ENCODE measurements at regions of chr4 and their contacts with region 1.

Region 1: DNA sequence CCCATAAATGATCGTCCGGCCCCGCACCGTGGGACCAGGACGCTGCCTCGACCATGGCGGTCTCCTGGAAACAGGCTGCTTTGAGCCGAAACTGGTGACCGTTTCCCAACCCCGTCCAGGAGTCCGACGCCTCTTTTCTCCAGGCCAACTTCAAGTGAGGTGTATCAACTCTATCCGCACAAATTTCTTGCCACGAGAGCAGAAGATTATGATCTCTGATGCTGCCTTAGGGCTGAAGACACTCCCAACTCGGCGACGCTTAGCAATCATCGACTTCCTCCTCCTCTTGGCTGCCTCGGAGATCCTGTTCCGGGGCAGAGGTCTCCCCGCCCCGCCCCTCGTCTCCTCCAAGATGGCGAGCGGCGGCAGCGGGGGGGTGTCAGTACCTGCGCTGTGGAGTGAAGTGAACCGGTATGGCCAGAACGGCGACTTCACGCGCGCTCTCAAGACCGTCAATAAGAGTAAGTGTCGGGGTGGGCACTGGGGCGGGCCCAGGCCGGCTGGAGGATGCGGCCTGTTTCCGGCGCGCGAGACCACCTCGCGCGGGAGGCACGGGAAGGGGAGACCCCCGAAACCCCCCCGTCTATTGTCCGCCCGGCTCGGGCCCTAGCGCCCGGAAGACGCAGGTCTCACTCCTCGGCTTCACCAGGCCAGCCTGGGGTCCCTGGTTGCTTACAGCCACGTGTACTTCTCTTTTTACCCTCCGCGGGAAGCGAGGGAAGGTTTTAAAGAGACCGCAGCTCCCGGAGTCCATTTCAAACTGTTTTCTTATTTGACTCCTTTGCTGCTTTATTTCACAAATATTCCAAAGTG is at the start of gene SRP72:
- DNase-seq: peak; percentile 88
- H3K4me3 Mint-ChIP-seq: peak within 1 kb of the TSS; percentile 98
- H3K27ac Mint-ChIP-seq: peak within 1 kb of the TSS; percentile 99
- H3K4me1 Mint-ChIP-seq: peaks cover 60% of the 10 kb centered on the region
- H3K27me3 Mint-ChIP-seq: no peaks in the 10 kb centered on the region
- total RNA-seq, gene SRP72: 199 and 211 TPM in 2 replicates

Region 2: DNA sequence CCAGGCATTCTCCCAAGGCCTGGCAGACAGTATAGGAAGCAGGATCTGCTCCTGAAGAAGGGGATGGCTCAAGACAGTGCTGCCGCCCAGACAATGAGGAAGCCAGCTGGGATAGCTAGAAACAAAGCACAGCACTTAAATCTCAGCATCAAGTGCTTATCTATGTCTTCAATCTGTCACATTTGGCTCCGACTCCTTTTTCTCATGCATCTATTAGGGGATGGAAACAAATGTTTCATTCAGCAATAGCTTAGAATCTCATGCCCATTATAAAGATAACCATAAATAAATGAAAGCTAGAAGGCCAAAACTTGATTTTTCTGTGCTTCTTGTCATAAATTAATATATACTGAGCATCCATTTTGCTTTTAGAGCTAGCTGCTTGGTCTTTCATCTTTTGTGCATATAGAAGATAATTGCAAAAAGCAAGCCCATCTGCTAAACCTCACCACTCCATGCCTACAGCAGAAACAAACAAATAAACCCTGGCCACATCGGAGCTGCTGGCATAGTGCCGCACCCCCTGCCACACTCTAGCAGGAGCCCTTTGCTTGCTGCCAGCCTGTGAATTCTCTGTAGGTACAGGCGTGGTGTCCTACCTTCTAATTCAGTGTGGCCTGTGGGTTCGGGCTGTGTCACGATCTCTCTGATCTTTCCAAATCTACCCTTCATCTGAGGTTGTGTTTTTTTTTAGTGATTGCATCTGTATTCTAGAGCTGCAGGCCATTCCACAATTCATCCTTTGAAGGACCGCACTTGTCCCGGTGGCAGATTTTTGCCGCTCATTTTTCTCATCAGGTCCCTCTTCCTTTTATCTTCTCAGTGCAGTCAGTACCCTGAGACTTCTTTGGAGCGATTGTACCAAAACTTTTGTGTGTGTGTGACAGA is 155.9 kb before region 1 on chr4:
- intact Hi-C with region 1: no loop called
- DNase-seq: no peak
- H3K4me3 Mint-ChIP-seq: no peak overlapping the region
- H3K27ac Mint-ChIP-seq: no peak overlapping the region
- H3K4me1 Mint-ChIP-seq: no peaks in the 10 kb centered on the region
- H3K27me3 Mint-ChIP-seq: no peaks in the 10 kb centered on the region

Region 3: DNA sequence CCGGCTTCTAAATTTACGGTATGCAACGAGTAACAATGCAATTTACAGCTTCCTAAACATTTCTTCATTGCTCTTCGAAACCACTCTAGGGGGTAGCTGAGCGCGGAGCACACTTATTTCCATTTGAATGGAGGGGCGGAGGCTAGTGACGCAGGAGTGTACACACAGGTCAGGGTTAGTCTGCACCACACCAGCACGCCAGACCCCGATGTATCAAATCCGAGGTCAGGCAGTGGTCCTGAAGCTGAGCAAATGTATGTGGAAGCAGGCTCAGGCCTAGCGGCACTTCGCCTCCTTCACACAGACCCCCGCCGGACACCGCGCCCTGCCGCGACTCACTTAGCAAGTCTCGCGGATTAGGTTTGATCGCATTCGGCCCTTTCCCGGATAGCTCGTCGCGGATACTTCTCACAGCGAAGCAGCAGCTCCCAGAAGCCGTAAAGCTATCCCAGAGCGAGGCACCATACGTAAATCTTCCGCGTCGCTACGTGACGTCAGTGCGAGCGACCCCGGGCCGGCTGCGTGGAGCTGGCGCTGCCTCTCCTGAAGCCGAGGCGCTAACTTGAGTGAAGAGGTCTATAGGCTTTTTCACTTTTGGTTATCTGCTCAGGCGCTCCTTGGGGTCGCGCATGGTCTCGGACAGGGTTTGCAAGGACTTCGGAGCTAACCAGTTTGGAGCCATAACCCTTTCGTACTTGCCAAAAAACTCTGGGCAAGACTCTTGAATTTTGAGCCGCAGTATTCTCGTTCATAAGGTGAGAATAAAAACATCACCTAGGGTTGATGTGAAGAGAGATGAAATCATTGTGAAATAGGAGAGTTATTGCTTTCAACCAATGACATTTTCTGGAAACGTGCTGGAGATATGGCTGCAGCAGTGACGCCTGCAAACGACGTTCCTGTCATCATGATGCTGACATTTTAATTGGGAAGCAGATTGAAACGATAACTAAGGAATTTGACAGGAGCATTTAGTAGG is 80.2 kb before region 1 on chr4 and contains the start of gene AASDH:
- intact Hi-C with region 1: loop called (anchors 1 kb)
- DNase-seq: peak; percentile 93
- H3K4me3 Mint-ChIP-seq: peak within 1 kb of the TSS; percentile 92
- H3K27ac Mint-ChIP-seq: peak within 1 kb of the TSS; percentile 97
- H3K4me1 Mint-ChIP-seq: peaks cover 26% of the 10 kb centered on the region
- H3K27me3 Mint-ChIP-seq: no peaks in the 10 kb centered on the region
- total RNA-seq, gene AASDH: 9.8 and 12.0 TPM in 2 replicates

Region 4: DNA sequence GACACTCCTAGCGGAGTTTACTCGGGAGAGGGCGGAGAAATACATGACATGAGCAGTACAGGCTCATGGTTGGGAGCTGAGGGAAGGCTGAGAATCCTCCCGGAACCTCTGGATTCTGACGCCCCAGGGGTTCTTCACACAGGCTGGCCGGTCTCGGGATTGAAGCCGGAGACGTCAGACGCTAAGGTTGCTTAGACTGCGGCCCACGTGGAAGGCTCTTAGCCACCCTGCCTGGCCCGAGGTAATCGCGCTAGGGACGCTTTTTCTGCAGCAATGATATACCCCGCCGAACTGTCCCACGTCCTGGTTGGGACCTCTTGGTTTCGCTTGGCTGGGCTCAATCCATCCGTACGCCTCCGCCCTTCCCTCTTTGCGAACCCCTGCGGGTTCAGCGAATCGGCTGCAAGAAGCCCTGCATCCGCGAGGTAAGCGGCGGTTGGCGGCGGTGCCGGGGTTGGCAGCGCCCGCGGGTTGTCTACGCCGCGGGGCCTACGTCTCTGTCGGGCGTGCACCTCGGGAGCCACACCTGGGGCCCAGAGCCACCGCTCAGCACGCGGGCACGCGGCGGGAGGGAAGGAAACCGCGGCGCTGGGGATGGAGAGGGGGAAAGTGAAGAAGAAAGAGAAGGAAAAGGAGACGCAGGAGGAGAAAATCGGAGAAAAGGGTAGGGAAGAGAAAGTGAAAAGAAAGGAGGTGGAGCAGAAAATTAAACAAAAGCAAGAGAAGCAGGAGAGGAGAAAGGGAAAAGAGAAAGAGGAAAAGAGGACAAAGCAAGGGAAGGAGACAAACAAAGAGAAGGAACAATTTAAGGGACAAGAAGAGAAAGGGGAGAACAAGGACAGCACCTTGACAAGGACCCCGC is 38.0 kb after region 1 on chr4 and contains the start of gene ARL9:
- intact Hi-C with region 1: loop called (anchors 1 kb)
- DNase-seq: peak; percentile 38
- H3K4me3 Mint-ChIP-seq: peak within 1 kb of the TSS; percentile 88
- H3K27ac Mint-ChIP-seq: peak within 1 kb of the TSS; percentile 76
- H3K4me1 Mint-ChIP-seq: peaks cover 20% of the 10 kb centered on the region
- H3K27me3 Mint-ChIP-seq: peaks cover 13% of the 10 kb centered on the region
- total RNA-seq, gene ARL9: 0.13 and 0.32 TPM in 2 replicates

Region 5: DNA sequence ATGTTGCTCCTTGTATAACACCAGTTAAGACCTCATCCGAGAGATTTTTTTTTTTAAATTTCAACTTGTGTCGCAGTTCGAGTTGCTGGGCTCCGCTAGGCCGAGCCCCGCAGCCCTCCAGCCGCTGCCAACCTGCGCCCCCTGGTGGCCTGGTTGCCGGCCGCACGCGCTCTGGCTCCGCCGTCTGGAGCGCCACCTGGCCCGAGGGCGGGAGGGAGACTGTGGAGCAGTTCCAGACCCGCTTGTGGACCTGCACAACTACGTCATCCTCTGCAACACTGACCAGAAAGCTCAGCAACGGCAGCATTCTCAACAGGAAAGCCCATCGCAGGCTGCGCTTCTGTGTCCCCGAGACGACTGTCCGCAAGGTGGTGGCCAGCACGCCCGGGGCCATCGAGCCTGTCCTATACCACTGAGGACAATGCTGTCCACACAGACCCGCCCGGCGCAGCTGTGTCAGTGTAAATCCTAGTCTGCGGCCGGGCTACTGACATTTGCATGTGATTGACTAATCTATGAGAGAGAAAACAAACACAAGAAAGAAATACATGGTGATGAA is 77.2 kb after region 1 on chr4:
- intact Hi-C with region 1: loop called (anchors 2 kb)
- DNase-seq: peak; percentile 78
- H3K4me3 Mint-ChIP-seq: peak overlapping the region; percentile 68
- H3K27ac Mint-ChIP-seq: no peak overlapping the region
- H3K4me1 Mint-ChIP-seq: peaks cover 24% of the 10 kb centered on the region
- H3K27me3 Mint-ChIP-seq: peaks cover 15% of the 10 kb centered on the region

Region 6: GRCh38 chr4:56587091-56587490 is 119.6 kb after region 1 on chr4:
- intact Hi-C with region 1: no loop called
- DNase-seq: no peak
- H3K4me3 Mint-ChIP-seq: no peak overlapping the region
- H3K27ac Mint-ChIP-seq: no peak overlapping the region
- H3K4me1 Mint-ChIP-seq: no peaks in the 10 kb centered on the region
- H3K27me3 Mint-ChIP-seq: peaks cover 20% of the 10 kb centered on the region

Region 7: DNA sequence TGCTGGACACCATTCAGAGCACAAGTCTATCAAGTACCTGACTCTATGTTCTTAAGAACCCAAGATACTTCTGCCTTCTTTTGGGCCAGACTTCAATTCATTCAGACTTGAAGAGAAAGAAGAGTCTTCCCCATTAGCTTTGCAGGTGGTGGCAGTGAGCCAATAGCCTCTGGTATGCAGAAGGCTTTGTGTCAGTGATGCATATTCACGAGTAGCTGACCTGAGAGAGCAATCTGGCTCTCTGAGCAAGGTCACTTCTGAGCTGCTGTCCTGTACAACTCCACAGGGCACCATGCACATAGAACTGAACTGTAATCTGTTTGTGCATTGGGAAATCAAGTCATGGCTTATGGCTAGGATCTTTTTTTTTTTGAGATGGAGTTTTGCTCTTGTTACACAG is 393.9 kb after region 1 on chr4:
- intact Hi-C with region 1: no loop called
- DNase-seq: no peak
- H3K4me3 Mint-ChIP-seq: no peak overlapping the region
- H3K27ac Mint-ChIP-seq: no peak overlapping the region
- H3K4me1 Mint-ChIP-seq: no peaks in the 10 kb centered on the region
- H3K27me3 Mint-ChIP-seq: peaks cover 6% of the 10 kb centered on the region

Region 8: DNA sequence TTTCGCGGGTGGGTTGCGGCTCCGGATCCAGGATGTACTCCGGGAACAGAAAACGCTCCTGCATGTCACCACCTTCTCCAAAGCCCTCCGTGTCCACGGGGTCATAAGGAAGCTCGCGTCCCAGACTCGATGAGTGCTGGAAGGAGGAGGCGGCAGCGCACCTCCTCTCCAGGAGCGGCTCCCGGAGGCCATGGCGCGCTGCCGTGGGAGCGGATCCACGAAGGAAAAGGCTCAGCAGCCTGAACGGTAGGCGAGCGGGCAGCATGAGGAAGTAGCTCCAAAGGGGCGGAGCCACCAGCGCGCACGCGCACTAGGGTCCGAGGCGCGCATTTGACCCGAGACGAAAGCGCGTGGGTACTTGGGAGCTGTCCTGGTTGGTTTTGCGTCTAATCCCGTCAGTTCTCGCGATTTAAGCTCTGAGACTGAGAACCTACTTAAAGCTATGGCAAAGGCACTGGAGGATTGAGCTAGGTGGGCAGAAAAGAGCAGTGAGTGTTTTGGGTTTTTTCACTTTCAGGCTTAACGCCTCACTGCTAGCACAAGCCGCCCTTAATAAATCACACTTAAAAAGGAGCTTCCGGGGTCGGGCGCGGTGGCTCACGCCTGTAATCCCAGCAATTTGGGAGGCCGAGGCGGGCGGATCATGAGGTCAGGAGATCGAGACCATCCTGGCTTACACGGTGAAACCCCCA is 510.0 kb after region 1 on chr4 and contains the start of gene NOA1:
- intact Hi-C with region 1: loop called (anchors 1 kb)
- DNase-seq: peak; percentile 98
- H3K4me3 Mint-ChIP-seq: peak within 1 kb of the TSS; percentile 100
- H3K27ac Mint-ChIP-seq: peak within 1 kb of the TSS; percentile 100
- H3K4me1 Mint-ChIP-seq: peaks cover 51% of the 10 kb centered on the region
- H3K27me3 Mint-ChIP-seq: no peaks in the 10 kb centered on the region
- total RNA-seq, gene NOA1: 17.7 and 18.3 TPM in 2 replicates

Measured in activated T-helper 1 cell treated with anti-CD3 and anti-CD28 coated beads, Interleukin-12 subunit alpha, Interleukin-12 subunit beta, Interleukin-2, Interleukin-4 antibody, amounts not matched to agents 30 ng/mL and 10 ng/mL and 1 ng/mL, durations not matched to agents 14 hours and 24 hours and 36 hours (primary cell).